Head of caudate nucleus (tissue), 42 donors: ENCODE measurements at regions of chr5 and their contacts with region 1.

Region 1: DNA sequence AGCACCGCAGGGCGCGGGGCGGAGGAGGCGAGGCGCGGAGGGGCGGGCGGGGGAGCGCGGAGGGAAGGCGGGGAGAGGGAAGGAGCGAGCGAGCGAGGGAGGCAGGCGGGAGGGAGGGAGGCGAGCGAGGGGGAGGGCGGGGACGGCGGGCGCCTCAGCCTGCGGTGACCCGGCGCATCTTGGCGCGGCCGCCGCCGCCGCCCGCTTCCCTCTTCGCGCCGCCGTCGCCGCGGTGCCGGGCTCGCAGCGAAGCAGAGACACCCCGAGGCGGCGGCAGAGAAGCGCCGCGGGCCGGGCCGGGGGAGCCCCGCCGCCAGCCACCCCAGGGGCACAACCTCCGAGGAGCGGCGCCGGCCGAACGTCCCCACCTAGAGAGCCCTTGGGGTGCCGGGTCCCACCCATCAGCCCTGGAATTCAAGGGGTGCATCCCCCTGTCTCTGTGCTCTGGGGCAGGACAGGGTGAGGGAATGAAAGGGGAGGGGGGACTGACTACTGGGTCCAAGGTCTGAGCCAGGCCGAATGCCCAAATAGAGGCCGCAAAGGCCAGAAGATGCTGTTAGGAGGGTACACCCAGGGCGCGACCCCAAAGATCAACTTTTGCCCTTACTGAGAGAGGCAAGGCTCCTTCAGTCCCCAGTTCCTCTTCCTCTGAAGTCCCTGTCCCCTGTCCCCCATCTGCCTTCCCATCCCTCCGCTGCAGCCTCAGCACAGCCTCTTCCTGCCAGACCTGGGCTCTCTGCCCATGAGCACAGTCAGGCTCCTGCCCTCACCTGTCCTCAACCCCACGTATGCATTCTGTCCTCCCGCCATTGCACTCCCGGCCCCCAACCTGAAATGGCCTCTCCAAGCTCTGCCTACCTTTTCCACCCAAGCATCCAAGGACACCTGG is at the start of gene ADAMTS2:
- DNase-seq: peak in 39 of 42 donors; percentile 15 to 87 (median 62)

Region 2: GRCh38 chr5:179176571-179177230 is 169.0 kb before region 1 on chr5:
- intact Hi-C with region 1: loop called (anchors 10 kb)
- DNase-seq: peak in 14 of 42 donors; percentile 11 to 66 (median 23)

Region 3: GRCh38 chr5:179212870-179213269 is 132.8 kb before region 1 on chr5:
- intact Hi-C with region 1: no loop called
- DNase-seq: peak in 19 of 42 donors; percentile 13 to 74 (median 28)

Region 4: DNA sequence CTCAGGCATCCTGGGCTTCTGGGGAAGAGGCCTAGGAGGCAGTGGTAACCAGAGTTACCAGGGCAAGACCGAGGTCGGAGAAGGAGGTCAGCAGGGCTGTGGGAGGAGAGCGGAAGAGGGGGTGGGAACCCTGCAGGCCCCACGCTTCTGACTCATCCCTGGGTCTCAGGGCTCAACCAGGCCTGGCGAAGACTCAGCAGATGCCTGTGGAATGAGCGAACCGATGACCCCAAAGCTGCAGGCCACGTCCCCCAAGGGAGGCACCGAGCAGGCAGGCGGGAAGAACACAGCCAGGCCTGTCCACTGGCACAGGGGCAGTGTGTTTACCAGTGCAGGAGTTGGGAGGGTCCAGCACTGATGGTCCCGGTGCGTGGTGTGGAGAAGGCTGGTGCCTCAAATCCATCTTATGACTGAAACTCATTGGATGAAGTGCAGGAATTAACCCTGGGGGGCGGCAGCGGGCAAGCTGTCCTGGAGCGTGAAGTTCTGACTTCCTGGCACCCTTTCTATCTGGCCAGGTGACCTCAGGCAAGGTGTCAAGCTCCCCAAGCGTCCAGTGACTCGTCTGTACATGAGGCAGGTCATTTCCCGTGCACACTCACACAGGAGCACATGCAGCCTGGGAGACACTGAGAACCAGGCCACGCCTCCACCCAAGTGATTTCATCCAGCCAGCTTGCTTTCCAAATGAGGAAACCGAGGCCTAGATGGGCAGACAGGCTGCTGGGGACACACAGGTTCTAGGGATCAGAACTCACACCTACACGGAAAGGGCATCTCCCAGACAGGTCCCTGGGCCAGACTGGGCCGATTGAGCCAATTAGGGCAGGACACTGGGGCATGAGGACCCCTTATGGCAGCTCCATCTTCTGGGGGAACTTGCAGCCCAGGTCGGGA is 69.5 kb before region 1 on chr5:
- intact Hi-C with region 1: no loop called
- DNase-seq: no peak

Region 5: DNA sequence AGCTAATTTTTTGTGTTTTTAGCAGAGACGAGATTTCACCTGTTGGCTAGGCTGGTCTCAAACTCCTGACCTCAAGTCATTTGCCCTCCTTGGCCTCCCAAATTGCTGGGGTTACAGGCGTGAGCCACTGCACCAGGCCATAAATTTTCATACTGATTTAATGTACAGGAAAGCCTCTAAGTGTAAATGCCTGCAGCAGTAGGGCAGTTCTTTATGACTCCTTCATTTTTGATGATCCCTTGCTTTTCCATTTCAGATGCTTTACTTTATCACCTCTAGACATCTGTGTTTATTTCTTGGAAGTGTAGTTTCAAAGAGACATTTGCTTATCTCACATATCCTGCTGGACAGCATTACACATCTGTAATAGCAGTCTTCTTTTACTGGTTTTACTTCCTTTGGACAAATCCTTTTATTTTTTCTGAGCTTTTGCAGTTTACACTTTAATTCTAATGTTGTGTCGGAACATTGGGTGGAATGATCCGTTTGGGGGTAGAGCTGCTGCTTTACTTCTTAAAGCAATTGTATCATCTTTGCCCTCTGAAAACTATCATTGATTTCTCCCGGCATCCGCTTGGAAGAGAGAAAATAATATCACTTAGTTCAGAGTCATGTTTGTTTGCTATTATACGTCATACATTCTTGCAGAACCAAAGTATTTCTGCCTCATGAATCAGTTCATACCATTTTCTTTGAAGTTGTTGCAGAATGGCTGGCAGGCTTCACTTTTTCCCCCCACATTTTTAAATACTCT is 1209.7 kb after region 1 on chr5:
- intact Hi-C with region 1: no loop called
- DNase-seq: no peak